OCI-LY7 (cell line): ENCODE measurements at regions of chr1 and their contacts with region 1.

Region 1: DNA sequence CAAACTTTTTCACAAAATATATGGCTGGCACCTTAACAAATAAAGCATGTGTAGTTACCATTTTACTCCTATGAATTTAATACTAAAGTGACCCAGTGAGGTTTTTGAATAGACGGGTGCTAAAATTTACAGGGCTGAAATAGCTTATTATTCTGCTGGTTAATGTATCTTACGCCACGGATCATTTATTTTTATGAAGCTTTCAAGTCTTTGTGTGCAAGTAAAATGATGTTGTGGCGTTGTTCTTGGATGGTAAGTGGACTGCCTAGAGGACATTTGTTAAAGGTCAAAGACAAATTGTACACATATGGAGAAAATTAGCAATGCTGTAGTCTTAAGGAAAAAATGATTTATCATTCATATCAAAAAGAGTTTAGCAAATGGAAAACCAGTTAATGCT is 22.8 kb downstream of the INSL5 start:
- DNase-seq: no peak
- H3K4me3 ChIP-seq: no peak overlapping the region
- H3K27ac ChIP-seq: no peak overlapping the region
- H3K4me1 ChIP-seq: peaks cover 31% of the 10 kb centered on the region
- CTCF ChIP-seq: no peak

Region 2: GRCh38 chr1:66788231-66788939 is 10.1 kb after region 1 on chr1:
- CTCF ChIA-PET with region 1: no interaction called
- POLR2A ChIA-PET with region 1: interaction called, 15 read pairs
- intact Hi-C with region 1: no loop called
- DNase-seq: peak; percentile 56
- H3K4me3 ChIP-seq: peak overlapping the region; percentile 18
- H3K27ac ChIP-seq: peak overlapping the region; percentile 9
- H3K4me1 ChIP-seq: peaks cover 20% of the 10 kb centered on the region
- CTCF ChIP-seq: 0 out of 2 replicates have a peak, but pooled peaks have one; percentile 12

Region 3: GRCh38 chr1:66867501-66867900 is 89.2 kb after region 1 on chr1:
- CTCF ChIA-PET with region 1: no interaction called
- POLR2A ChIA-PET with region 1: no interaction called
- intact Hi-C with region 1: no loop called
- DNase-seq: no peak
- H3K4me3 ChIP-seq: no peak overlapping the region
- H3K27ac ChIP-seq: no peak overlapping the region
- H3K4me1 ChIP-seq: no peaks in the 10 kb centered on the region
- CTCF ChIP-seq: no peak